ENCODE measurements at regions of chr18 and their contacts with region 1.

Region 1: DNA sequence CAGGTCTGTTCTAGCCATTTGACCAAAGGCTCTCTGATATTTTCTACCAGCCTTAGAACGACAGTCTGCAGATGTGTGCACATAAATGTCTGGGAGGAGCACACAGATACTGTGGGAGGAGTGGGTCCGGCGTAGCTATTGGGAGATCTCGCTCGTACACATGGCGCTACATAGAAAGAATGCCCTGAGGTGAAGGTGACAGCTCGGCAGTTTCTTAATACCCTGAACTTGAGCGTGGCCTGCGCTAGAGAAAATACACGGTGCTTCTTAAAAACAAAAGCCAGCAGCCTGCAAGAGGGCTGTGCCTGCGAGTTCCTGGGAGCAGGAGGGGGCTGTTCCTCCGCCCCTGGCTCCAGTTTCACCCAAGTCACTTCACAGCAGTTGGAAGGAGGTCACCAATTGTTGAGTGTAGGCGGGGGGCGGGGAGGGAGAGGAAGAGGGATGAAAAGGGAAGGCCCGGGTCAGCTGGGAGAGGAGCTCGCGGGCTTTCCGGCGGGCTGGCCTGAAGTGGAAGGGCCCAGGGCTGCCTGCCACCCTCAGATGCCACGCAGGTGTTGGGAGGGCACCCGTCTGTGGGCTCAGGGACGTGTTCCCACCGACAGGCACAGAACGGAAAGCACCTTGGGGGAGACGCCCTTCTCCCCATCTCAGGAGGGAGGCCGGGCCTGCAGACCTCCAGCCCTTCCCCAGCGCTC is 124.7 kb upstream of the ZNF516 start:
- DNase-seq: peak in 24 of 42 donors; percentile 23 to 65 (median 42)

Region 2: DNA sequence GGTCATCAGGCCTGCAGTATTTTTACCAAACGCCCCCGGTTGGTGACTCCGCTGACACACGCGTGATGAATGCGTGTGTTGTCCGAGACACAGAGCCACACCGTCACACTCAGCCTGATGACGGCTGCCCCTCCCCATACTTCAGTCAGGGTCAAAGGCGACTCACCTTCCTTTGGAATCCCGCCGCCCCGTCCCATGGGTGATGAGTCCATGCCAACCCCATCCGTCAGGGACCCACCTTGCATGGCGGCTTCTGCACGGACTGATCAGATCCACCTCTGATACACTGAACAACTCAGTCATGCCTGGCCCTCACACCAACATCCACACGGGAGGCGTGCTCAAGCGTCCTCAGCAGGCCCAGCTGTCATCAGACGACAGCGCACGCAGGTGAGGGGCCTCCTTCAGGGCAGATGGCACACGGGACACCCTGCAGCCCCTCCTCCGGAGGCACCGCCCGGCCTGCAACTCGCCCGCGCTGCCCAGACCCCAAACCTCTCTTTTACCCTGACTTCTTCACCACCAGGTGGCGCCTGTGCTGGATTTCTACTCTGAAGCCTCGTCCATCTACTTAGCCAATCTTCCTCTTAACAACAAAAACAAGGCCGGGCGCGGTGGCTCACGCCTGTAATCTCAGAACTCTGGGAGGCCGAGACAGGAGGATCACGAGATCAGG is 213.9 kb before region 1 on chr18:
- intact Hi-C with region 1: loop called (anchors 10 kb)
- DNase-seq: peak in 19 of 42 donors; percentile 36 to 81 (median 60)

Measured in head of caudate nucleus (tissue), 42 donors.